Activated B cell treated with CpG ODN at 0.5 μM for 24 hours (primary cell): ENCODE measurements at regions of chr11 and their contacts with region 1.

Region 1: DNA sequence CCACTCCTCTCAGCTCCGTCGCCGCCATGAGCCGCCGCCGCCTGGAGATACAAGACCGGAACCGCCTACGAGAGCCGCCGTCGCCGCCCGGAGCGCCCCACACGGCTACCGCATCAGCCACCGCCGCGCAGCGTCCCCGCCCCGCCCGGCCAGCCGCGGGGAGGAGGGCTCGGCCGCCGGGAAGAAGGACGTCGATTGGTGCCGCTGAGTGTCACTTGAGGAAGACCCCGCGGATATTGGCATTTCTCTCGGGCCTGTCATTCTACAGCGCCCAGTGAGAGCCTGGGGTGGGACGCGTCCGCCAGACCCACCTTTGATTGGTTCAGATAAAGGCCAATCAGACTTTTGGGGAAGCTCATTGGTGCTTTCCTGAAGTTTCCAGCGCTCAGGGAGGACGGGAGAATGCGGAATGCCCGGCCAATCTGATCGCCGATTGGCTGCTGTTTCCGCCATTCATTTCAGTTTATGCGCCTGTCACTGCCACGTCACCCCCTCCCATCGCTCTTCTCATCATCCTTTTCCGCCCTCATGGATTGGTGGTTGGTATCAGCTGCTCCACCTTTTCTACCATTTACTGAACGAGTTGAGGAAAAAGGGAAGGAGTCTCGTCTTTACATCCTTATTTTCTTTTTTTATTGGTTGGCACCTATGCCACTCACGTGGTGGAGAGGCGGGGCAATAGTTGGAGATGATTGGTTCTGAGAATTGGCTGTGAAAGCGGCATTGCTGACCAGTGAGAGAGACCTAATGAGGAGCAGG is at the start of gene OSBP:
- DNase-seq: peak; percentile 86
- ATAC-seq: peak; percentile 80
- H3K4me3 Mint-ChIP-seq: peak within 1 kb of the TSS; percentile 96
- H3K27ac Mint-ChIP-seq: peak within 1 kb of the TSS; percentile 89
- H3K4me1 Mint-ChIP-seq: peaks cover 46% of the 10 kb centered on the region
- H3K27me3 Mint-ChIP-seq: no peaks in the 10 kb centered on the region
- CTCF ChIP-seq: no peak
- total RNA-seq, gene OSBP: 34.7 and 38.0 TPM in 2 replicates

Region 2: GRCh38 chr11:59216641-59217564 is 398.9 kb before region 1 on chr11:
- CTCF ChIA-PET with region 1: no interaction called
- POLR2A ChIA-PET with region 1: no interaction called
- intact Hi-C with region 1: loop called (anchors 1 kb)
- DNase-seq: peak; percentile 35
- ATAC-seq: peak; percentile 69
- H3K4me3 Mint-ChIP-seq: peak overlapping the region; percentile 52
- H3K27ac Mint-ChIP-seq: peak overlapping the region; percentile 91
- H3K4me1 Mint-ChIP-seq: peaks cover 100% of the 10 kb centered on the region
- H3K27me3 Mint-ChIP-seq: no peaks in the 10 kb centered on the region
- CTCF ChIP-seq: no peak

Region 3: DNA sequence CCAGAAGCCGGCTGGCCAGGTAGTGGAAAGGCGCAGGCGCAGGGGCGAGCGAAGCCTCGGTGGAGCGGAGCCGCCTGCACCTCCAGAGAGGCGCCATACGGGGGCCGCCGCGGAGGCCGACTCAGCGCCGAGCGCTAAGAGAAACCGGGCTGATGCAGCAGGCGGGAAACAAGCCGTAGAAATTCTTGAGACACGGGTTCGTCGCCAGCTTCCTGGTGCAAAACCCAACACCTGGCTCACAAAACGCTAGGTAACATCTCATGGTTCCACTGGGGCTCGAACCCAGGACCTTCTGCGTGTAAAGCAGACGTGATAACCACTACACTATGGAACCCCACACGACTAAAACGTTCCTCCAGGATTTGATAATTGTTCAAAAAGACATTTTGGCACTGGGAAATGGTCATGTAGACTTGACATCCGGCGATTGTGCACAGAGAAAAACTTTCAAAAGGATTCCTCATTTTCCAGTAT is 65.4 kb before region 1 on chr11:
- CTCF ChIA-PET with region 1: no interaction called
- POLR2A ChIA-PET with region 1: interaction called, 16 read pairs
- intact Hi-C with region 1: loop called (anchors 1 kb)
- DNase-seq: peak; percentile 75
- ATAC-seq: peak; percentile 91
- H3K4me3 Mint-ChIP-seq: peak overlapping the region; percentile 87
- H3K27ac Mint-ChIP-seq: peak overlapping the region; percentile 94
- H3K4me1 Mint-ChIP-seq: peaks cover 31% of the 10 kb centered on the region
- H3K27me3 Mint-ChIP-seq: no peaks in the 10 kb centered on the region
- CTCF ChIP-seq: peak; percentile 43

Region 4: GRCh38 chr11:59668950-59669610 is 53.3 kb after region 1 on chr11 and contains the start of gene PATL1:
- CTCF ChIA-PET with region 1: no interaction called
- POLR2A ChIA-PET with region 1: interaction called, 76 read pairs
- intact Hi-C with region 1: loop called (anchors 1 kb)
- DNase-seq: peak; percentile 95
- ATAC-seq: peak; percentile 88
- H3K4me3 Mint-ChIP-seq: peak within 1 kb of the TSS; percentile 93
- H3K27ac Mint-ChIP-seq: peak within 1 kb of the TSS; percentile 97
- H3K4me1 Mint-ChIP-seq: peaks cover 27% of the 10 kb centered on the region
- H3K27me3 Mint-ChIP-seq: no peaks in the 10 kb centered on the region
- CTCF ChIP-seq: no peak
- total RNA-seq, gene PATL1: 42.0 and 45.1 TPM in 2 replicates

Region 5: DNA sequence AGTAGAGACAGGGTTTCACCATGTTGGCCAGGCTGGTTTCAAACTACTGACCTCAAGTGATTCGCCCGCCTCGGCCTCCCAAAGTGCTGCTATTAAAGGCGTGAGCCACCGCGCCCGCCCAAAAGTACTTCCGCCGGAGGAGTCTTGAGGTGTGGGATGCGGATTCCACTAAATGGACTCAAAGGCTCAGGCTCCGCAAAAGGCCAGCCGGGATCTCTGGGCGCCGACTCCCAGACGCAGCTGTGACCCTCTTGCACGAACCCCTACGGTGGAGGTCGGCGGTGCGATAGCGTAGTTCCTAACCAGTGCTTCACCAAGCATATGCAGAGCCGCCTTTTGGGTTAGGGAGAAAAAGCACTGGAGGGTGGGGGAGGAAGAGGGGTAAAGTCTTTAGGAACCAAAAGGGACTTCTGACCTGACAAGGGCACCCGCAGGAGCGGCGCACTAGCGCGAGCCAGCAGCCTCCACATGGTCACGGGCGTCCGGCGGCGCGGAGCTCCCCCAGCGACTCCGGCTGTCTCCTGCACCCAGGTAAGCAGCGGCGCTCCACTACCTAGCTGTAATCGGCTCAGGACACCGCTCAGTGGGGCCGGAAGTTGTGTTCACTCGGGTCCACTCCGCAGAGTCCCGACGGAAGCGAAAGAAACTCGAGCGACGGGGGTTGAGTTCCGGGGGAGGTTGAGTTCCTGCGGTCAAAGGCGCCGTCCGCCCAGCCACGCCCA is 194.5 kb after region 1 on chr11 and contains the start of gene MRPL16:
- CTCF ChIA-PET with region 1: no interaction called
- POLR2A ChIA-PET with region 1: no interaction called
- intact Hi-C with region 1: loop called (anchors 1 kb)
- DNase-seq: peak; percentile 81
- ATAC-seq: peak; percentile 98
- H3K4me3 Mint-ChIP-seq: peak within 1 kb of the TSS; percentile 92
- H3K27ac Mint-ChIP-seq: peak within 1 kb of the TSS; percentile 87
- H3K4me1 Mint-ChIP-seq: peaks cover 20% of the 10 kb centered on the region
- H3K27me3 Mint-ChIP-seq: peaks cover 3% of the 10 kb centered on the region
- CTCF ChIP-seq: no peak
- total RNA-seq, gene MRPL16: 56.4 and 57.7 TPM in 2 replicates

Region 6: GRCh38 chr11:61161190-61162091 is 1545.6 kb after region 1 on chr11 and contains the start of gene VPS37C:
- CTCF ChIA-PET with region 1: no interaction called
- POLR2A ChIA-PET with region 1: no interaction called
- intact Hi-C with region 1: loop called (anchors 5 kb)
- DNase-seq: peak; percentile 98
- ATAC-seq: peak; percentile 77
- H3K4me3 Mint-ChIP-seq: peak within 1 kb of the TSS; percentile 93
- H3K27ac Mint-ChIP-seq: peak within 1 kb of the TSS; percentile 97
- H3K4me1 Mint-ChIP-seq: peaks cover 65% of the 10 kb centered on the region
- H3K27me3 Mint-ChIP-seq: no peaks in the 10 kb centered on the region
- CTCF ChIP-seq: no peak
- total RNA-seq, gene VPS37C: 14.4 and 18.1 TPM in 2 replicates